Ovary (tissue), 10 donors: ENCODE measurements at regions of chr22 and their contacts with region 1.

Region 1: DNA sequence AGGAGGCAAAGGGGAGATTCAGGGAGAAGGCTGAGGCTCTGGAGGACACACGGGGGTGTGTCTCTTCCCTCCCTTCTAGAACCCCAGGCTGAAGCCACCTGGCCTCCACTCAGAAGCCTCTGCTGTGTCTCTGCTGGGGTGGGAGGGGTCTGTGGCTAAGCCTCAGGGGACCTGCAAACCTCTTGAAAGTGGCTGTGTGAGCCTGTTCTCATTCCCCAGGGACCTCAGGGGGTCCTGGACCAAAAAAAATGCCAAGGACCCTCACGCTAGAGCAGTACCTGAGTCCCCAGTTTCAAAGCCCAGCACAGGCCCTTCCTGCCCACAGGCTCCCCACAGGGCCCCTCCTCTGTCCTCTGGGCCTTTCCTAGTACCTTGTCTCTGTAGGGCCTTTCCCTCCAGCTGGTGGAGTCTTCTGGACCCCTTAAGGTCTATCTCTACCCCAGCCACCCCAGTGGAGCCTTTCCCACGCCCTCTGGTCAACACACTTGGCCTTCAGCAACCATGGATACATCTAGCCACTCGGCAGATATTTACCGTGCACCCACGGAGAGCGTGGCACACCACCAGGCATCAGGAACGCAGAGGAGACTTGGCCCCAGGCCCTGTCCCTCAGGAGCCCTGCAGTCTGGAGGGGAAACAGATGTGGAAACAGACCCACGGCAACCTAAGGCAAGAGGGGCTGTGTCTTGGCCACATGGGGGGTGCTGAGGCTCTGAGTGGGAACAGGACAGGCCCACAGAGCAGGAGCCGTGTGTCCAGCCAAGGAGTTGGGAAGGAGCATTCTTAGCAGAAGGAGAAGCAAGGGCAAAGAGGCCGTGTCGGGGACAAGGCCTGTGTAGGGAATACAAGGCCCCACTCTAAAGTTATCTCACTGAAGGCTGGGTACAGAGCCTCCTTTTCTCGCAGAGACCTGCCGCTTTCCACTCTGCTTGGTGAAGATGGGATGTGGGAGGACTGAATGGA is 18.5 kb downstream of the PLA2G6 start:
- DNase-seq: no peak
- H3K4me3 ChIP-seq: no peak overlapping the region
- H3K27ac ChIP-seq: no peak overlapping the region
- H3K4me1 ChIP-seq: no peaks in the 10 kb centered on the region
- H3K27me3 ChIP-seq: no peaks in the 10 kb centered on the region
- CTCF ChIP-seq: no peak
- EP300 ChIP-seq: no peak
- POLR2A ChIP-seq: no peak

Region 2: GRCh38 chr22:38429499-38430068 is 266.4 kb after region 1 on chr22:
- intact Hi-C with region 1: loop called in 1 of 4 experiments (anchors 5 kb)
- DNase-seq: no peak
- H3K4me3 ChIP-seq: no peak overlapping the region
- H3K27ac ChIP-seq: no peak overlapping the region
- H3K4me1 ChIP-seq: no peaks in the 10 kb centered on the region
- H3K27me3 ChIP-seq: no peaks in the 10 kb centered on the region
- CTCF ChIP-seq: no peak
- EP300 ChIP-seq: no peak
- POLR2A ChIP-seq: no peak

Region 3: GRCh38 chr22:38461414-38462081 is 298.4 kb after region 1 on chr22:
- intact Hi-C with region 1: no loop called
- DNase-seq: peak; percentile 72 to 84 (median 76)
- H3K4me3 ChIP-seq: no peak overlapping the region
- H3K27ac ChIP-seq: no peak overlapping the region
- H3K4me1 ChIP-seq: peaks cover 5% of the 10 kb centered on the region
- H3K27me3 ChIP-seq: no peaks in the 10 kb centered on the region
- CTCF ChIP-seq: no peak
- EP300 ChIP-seq: no peak
- POLR2A ChIP-seq: no peak